ENCODE measurements at regions of chr6 and their contacts with region 1.

Region 1: DNA sequence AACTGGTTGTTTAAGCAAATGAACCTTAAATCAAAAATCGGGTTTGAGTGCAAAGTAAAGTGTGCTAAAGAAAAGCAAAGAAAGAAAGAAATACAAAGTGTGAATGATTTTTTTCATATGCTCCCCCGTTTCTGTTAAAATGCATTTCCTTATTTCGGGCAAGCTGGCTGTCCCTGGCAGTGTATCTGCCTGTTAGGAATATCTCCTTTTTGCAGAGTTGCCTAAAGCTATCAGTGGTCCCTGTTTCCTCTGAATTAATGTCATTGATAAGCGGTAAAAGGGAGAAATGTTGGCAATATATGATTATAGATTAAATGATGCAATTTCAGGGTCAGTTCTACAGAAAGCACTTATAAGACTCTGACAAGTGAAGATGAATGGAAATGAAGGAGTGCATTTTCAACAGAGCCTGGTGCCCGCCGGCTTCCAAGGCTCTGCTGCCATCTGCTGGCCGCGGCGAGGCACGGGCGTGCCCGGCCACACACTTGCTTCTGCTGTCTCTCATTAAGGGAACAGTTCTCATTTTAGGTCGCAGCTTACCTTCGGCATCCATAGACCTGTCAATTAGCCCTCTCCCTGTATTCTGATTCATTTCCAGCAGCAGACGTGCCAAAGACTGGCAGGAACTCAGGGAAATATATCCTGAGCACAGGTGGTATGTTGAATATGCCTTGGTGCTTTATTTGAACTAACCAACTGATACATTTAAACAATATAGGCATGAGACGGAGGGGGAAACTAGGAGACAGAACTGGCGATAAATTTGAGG is 381.9 kb downstream of the C6orf118 start:
- DNase-seq: peak; percentile 87
- H3K4me3 ChIP-seq: no peak overlapping the region
- H3K27ac ChIP-seq: no peak overlapping the region
- H3K4me1 ChIP-seq: peaks cover 0 to 4% (median 0%) of the 10 kb centered on the region in 6 donors
- H3K27me3 ChIP-seq: no peaks in the 10 kb centered on the region
- CTCF ChIP-seq: peak; percentile 47 to 94 (median 87)
- POLR2A ChIP-seq: no peak

Region 2: GRCh38 chr6:163180874-163181541 is 1746.5 kb before region 1 on chr6:
- intact Hi-C with region 1: loop called (anchors 5 kb)
- DNase-seq: no peak
- H3K4me3 ChIP-seq: peak overlapping the region in 1 of 8 donors; percentile 0
- H3K27ac ChIP-seq: no peak overlapping the region
- H3K4me1 ChIP-seq: peaks cover 0 to 4% (median 0%) of the 10 kb centered on the region in 6 donors
- H3K27me3 ChIP-seq: peaks cover 0 to 13% (median 0%) of the 10 kb centered on the region in 7 donors
- CTCF ChIP-seq: peak; percentile 36 to 70 (median 59)
- POLR2A ChIP-seq: no peak

Region 3: GRCh38 chr6:164690241-164690640 is 237.2 kb before region 1 on chr6:
- intact Hi-C with region 1: no loop called
- DNase-seq: no peak
- H3K4me3 ChIP-seq: no peak overlapping the region
- H3K27ac ChIP-seq: no peak overlapping the region
- H3K4me1 ChIP-seq: no peaks in the 10 kb centered on the region
- H3K27me3 ChIP-seq: no peaks in the 10 kb centered on the region
- CTCF ChIP-seq: no peak
- POLR2A ChIP-seq: no peak

Region 4: DNA sequence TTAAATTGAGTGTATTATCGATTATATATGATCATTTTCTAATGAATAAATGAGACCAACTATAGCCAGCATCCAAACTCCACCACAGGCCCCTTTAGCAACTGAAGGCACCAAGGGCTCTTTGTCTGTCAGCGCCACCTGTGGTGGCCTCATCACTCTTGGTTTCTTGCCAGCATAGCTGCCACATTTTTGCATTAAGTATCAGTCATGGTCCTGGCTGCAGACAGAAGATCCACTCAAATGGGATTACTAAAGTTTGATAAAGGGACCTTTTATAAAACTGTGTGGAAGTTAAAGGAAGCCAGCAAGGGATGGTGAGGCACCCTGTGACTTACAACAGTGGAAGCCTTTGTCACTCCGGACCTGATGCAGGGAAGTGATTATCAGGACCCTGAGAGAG is 219.0 kb after region 1 on chr6:
- intact Hi-C with region 1: no loop called
- DNase-seq: no peak
- H3K4me3 ChIP-seq: no peak overlapping the region
- H3K27ac ChIP-seq: no peak overlapping the region
- H3K4me1 ChIP-seq: no peaks in the 10 kb centered on the region
- H3K27me3 ChIP-seq: no peaks in the 10 kb centered on the region
- CTCF ChIP-seq: no peak
- POLR2A ChIP-seq: no peak

Measured in spleen (tissue), 13 donors.